ENCODE measurements at regions of chr11 and their contacts with region 1.

Region 1: GRCh38 chr11:118290923-118291322 is 13.6 kb upstream of the CD3E start:
- DNase-seq: peak; percentile 61
- H3K4me3 ChIP-seq: no peak overlapping the region
- H3K27ac ChIP-seq: no peak overlapping the region
- H3K4me1 ChIP-seq: peaks cover 0 to 17% (median 4%) of the 10 kb centered on the region in 4 donors
- H3K27me3 ChIP-seq: peaks cover 4% of the 10 kb centered on the region
- CTCF ChIP-seq: peak; percentile 34 to 73 (median 49)
- EP300 ChIP-seq: no peak
- POLR2A ChIP-seq: no peak

Region 2: DNA sequence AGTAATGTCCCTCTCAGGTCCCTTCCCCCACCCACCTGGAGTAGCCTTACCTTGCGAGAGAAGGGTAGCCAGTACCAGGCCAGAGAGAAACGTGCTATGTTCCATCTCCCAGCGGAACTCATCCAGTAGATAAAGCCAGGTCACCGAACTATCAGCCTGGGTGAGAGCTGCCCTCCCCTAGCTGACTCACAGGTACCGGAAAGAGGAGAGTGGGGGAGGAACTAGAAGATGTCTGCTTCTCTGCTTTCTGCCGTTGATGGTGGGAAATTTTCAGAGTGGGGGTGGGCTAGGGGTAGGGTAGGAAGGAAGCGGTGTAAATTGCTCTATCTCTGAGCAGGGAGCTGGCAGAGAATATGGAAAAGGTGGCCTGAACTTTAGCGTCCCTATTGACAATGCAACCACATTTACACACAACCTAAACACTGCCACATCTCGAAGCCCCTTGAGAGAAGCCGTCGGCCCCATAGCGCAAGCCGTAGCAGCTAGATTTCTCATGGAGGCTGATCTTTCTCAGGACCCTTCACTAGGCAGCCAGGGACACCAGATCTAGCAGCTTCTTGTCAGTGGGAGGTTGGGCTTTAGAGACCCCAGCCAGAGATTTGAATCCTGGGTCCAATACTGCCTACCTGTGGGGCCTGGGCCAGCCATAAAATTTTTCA is 51.7 kb after region 1 on chr11 and contains the start of gene CD3D:
- in situ Hi-C with region 1: loop called in 2 of 4 experiments (anchors 5 to 10 kb)
- intact Hi-C with region 1: no loop called
- DNase-seq: no peak
- H3K4me3 ChIP-seq: peak within 1 kb of the TSS in 2 of 4 donors; percentile 2 to 12
- H3K27ac ChIP-seq: peak within 1 kb of the TSS; percentile 38 to 53 (median 44)
- H3K4me1 ChIP-seq: no peaks in the 10 kb centered on the region
- H3K27me3 ChIP-seq: peaks cover 14% of the 10 kb centered on the region
- CTCF ChIP-seq: no peak
- EP300 ChIP-seq: no peak
- POLR2A ChIP-seq: peak; percentile 26
- total RNA-seq, gene CD3D: 3.5 to 19.2 (median 15.3) TPM in 3 of 4 donors, not detected in the other

Region 3: DNA sequence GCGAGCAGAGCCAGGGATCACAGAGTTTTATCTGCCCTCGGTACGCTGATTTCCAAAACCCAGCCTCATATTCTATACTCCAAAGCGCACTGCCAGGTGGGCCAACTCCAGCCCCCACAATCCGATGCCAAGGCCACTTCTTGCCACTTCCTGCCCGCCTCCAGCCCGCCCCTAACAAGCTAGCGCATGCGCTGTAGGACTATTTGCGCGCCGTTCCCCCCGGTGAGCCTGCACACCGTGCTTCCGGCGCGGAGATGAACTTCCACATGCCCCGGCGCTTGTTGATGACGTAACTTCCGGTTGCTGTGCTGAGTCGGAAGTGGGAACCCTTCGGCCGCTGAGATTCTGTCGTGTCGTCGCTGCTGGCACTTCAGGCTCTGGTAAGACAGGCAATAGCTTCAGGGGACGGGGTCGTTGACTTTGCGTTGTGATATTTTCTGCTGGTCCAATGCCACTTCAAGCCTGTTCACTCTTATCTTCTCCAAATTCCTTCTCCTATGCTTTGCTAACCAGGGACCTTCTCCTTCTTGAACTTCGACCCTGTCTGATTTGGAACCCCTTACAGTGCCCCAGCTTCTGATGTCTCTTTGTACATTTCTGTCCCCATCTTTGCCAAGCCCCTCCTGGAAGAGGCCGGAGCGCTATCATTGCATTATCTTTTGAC is 68.5 kb after region 1 on chr11 and contains the start of gene UBE4A:
- in situ Hi-C with region 1: loop called in 1 of 4 experiments (anchors 10 kb)
- intact Hi-C with region 1: no loop called
- DNase-seq: peak; percentile 97
- H3K4me3 ChIP-seq: peak within 1 kb of the TSS; percentile 59 to 93 (median 70)
- H3K27ac ChIP-seq: peak within 1 kb of the TSS; percentile 52 to 85 (median 75)
- H3K4me1 ChIP-seq: peaks cover 6 to 17% (median 12%) of the 10 kb centered on the region in 4 donors
- H3K27me3 ChIP-seq: no peaks in the 10 kb centered on the region
- CTCF ChIP-seq: no peak
- EP300 ChIP-seq: no peak
- POLR2A ChIP-seq: peak; percentile 73
- total RNA-seq, gene UBE4A: 42.3 to 54.3 (median 49.2) TPM

Measured in transverse colon (tissue), 4 donors.